ENCODE measurements at regions of chr2 and their contacts with region 1.

Region 1: DNA sequence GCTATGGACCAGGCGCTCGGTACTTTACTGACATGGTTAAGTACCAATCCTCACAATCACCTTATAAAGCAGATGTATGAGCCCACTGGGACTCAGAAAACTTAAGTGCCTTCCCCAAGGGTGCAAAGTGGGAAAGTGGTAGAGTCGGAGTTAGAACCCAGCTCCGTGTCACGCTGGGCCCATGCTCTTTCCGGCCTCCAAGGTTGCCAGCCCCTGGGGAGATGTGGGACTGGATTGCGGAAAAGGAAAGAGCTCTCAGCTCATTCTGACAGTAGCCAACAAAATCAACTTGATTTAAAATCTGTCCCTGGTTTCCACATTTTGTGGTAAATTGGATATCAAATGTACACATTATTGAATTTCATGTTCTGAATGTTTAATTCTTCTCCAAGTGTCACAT is 403.8 kb downstream of the DCDC2C start:
- DNase-seq: no peak
- H3K4me3 ChIP-seq: no peak overlapping the region
- CTCF ChIP-seq: no peak
- POLR2A ChIP-seq: no peak

Region 2: GRCh38 chr2:3754280-3754679 is 352.9 kb before region 1 on chr2:
- intact Hi-C with region 1: loop called (anchors 5 kb)
- DNase-seq: peak in 1 of 2 donors; percentile 20
- H3K4me3 ChIP-seq: no peak overlapping the region
- CTCF ChIP-seq: no peak
- POLR2A ChIP-seq: no peak

Measured in lower leg skin (tissue), 4 donors.